ENCODE measurements at regions of chr18 and their contacts with region 1.

Region 1: GRCh38 chr18:47204908-47205522 is 28.9 kb upstream of the IER3IP1 start:
- DNase-seq: no peak
- H3K4me3 ChIP-seq: no peak overlapping the region
- CTCF ChIP-seq: peak; percentile 77

Region 2: DNA sequence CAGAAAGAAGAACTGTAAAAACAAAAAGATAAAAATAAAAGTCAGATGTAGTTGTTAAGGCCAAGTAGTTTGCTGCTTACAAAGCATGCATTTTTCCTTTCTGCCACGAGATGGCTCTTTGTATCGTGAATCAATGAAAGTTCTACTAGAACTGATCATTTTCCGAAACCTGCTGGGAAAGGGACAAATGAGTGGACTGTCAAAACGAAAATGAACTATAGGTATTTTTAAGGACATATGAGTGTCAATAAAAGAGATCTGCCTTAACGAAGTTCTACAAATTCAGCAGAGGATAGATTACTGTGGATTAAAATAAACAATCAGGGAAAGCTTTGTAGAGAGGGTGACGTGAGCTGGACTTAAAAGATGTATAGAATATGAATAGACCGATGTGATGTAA is 154.5 kb before region 1 on chr18:
- CTCF ChIA-PET with region 1: interaction called, 62 read pairs
- POLR2A ChIA-PET with region 1: no interaction called
- DNase-seq: peak; percentile 17
- H3K4me3 ChIP-seq: no peak overlapping the region
- CTCF ChIP-seq: peak; percentile 47

Region 3: GRCh38 chr18:47113796-47114540 is 91.0 kb before region 1 on chr18:
- CTCF ChIA-PET with region 1: interaction called, 187 read pairs
- POLR2A ChIA-PET with region 1: no interaction called
- DNase-seq: no peak
- H3K4me3 ChIP-seq: no peak overlapping the region
- CTCF ChIP-seq: no peak

Region 4: GRCh38 chr18:47191961-47192360 is 13.1 kb before region 1 on chr18:
- CTCF ChIA-PET with region 1: interaction called, 42 read pairs
- POLR2A ChIA-PET with region 1: no interaction called
- DNase-seq: no peak
- H3K4me3 ChIP-seq: no peak overlapping the region
- CTCF ChIP-seq: no peak

Region 5: GRCh38 chr18:47756364-47757016 is 551.5 kb after region 1 on chr18:
- CTCF ChIA-PET with region 1: interaction called, 19 read pairs
- POLR2A ChIA-PET with region 1: no interaction called
- DNase-seq: no peak
- H3K4me3 ChIP-seq: no peak overlapping the region
- CTCF ChIP-seq: peak; percentile 89

Measured in AG04449 (cell line).